Spleen (tissue), 13 donors: ENCODE measurements at regions of chr15 and their contacts with region 1.

Region 1: GRCh38 chr15:67839929-67840748 is at the start of gene RNU6-1:
- DNase-seq: peak; percentile 98
- H3K4me3 ChIP-seq: peak within 1 kb of the TSS; percentile 60 to 90 (median 75)
- H3K27ac ChIP-seq: peak within 1 kb of the TSS; percentile 90 to 99 (median 98)
- H3K4me1 ChIP-seq: peaks cover 5 to 84% (median 46%) of the 10 kb centered on the region in 6 donors
- H3K27me3 ChIP-seq: peaks cover 0 to 21% (median 11%) of the 10 kb centered on the region in 7 donors
- CTCF ChIP-seq: peak in 1 of 11 experiments; percentile 8
- POLR2A ChIP-seq: peak in 2 of 3 donors; percentile 82
- total RNA-seq, gene RNU6-1: not detected

Region 2: DNA sequence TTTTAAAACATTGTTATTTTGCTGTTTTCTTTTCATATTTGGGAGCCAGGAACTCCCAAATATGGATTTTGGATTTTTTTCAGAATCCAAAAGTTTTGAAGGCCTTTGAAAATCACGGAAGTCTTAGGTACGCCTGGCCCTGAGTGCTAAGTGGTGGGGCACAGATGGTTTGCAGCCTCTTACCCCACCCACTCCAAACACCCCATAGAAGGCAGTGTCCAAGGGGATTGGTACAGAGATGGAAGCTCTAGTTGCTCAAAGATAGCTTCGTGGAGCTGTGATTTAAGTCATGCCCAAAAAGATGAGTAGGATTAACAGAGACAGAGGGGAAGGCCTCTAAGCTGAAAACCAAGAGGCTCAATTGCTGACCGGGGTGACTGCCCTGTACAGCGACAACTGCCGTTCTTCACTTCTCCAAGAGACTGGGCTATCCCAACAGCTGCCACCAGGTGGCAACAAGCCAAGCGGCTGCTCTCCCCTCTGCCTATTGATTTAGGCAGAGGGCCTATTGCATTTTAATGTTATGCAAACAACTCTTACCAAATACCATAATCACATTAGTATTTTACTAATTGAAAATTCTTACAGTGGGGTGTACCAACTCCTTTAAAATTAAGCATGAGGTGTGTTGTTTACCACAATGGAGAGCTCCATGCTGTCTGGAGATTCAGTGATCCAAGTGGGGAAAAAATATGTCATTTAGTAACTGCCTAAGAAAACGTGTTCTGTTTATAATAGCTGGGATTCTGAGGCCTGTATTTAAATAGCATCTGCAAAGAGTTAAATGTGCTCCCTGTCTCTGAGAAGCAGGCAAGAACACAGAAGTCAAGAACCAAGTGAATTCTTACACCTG is 383.2 kb before region 1 on chr15:
- intact Hi-C with region 1: loop called (anchors 2 kb)
- DNase-seq: peak; percentile 94
- H3K4me3 ChIP-seq: no peak overlapping the region
- H3K27ac ChIP-seq: no peak overlapping the region
- H3K4me1 ChIP-seq: peaks cover 0 to 6% (median 0%) of the 10 kb centered on the region in 6 donors
- H3K27me3 ChIP-seq: peaks cover 0 to 6% (median 0%) of the 10 kb centered on the region in 7 donors
- CTCF ChIP-seq: peak; percentile 63 to 94 (median 89)
- POLR2A ChIP-seq: no peak

Region 3: GRCh38 chr15:67521029-67521811 is 318.9 kb before region 1 on chr15 and contains the start of gene C15orf61:
- intact Hi-C with region 1: loop called (anchors 5 kb)
- DNase-seq: peak; percentile 96
- H3K4me3 ChIP-seq: peak within 1 kb of the TSS; percentile 71 to 91 (median 85)
- H3K27ac ChIP-seq: peak within 1 kb of the TSS; percentile 90 to 97 (median 96)
- H3K4me1 ChIP-seq: peaks cover 12 to 42% (median 33%) of the 10 kb centered on the region in 6 donors
- H3K27me3 ChIP-seq: no peaks in the 10 kb centered on the region
- CTCF ChIP-seq: no peak
- POLR2A ChIP-seq: peak in 1 of 3 donors; percentile 42
- total RNA-seq, gene C15orf61: 2.8 to 10.0 (median 4.6) TPM